AG04449 (cell line): ENCODE measurements at regions of chr3 and their contacts with region 1.

Region 1: DNA sequence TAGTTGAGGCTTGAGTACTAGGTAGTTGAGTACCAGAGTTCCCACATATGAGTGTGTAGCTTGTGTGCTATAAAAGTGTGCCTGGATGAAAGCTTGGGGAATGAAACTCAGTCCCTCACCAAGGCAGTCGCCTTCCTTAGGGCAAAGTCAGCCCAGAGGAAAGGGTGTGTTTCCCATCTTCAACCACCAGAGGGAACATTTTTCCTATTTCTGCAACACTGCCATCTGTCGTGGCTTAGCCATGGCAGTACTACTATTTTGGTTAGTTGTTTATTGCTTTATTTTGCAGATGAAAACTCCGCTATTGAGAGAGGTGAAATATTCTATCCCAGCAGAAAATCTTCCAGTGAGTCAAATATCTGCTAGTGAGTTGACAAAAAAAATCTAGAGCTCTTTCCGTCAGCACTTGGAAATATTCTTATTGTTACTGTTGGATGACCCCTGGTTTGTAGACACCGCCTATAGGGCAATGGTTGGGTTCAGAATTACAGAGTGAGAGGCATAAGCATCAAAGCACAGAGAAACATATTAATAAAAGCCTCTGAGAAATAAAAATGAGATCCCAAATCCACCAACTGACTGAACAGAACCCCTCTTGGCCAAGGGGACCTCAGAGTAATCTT is 239.9 kb downstream of the CPNE4 start:
- DNase-seq: peak; percentile 21
- H3K4me3 ChIP-seq: no peak overlapping the region
- CTCF ChIP-seq: peak; percentile 80

Region 2: DNA sequence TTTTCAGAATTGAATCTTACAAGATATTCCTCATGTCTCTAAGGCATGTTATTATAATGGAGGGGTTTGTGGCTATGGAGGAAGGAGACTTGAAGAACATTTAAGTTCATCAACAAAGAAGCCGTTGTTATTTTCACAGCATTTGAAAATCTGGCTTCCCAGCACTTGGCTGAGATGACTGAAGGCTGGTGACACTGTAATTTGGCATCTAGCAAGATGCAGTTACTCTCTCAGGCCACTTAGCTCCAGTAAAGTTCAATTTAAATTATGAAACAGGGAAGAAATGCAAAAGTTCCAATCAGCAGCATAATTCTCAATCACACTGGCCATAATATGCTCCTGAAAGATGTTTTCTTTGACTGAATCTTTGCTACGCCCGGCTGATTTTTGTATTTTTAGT is 552.7 kb before region 1 on chr3:
- CTCF ChIA-PET with region 1: no interaction called
- POLR2A ChIA-PET with region 1: no interaction called
- DNase-seq: no peak
- H3K4me3 ChIP-seq: no peak overlapping the region
- CTCF ChIP-seq: no peak

Region 3: DNA sequence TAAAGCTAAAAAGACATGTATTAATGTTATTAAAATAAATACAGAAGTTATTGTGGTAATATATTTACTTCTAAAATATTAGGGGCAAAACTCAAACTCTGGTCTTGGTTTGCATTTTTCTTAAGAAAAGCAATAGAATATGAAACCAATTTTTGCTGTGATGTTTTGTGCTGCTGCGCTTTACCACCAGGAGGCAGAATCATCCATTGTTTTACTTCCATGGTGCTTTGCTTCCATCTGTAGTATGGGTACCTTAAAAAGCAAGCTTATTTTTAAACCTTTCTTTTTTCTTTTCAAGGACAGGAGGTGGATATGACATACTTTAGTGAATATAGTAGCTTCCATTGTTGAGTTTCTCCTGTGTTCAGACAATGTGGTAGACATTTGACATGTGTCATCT is 245.5 kb before region 1 on chr3:
- CTCF ChIA-PET with region 1: interaction called, 16 read pairs
- POLR2A ChIA-PET with region 1: no interaction called
- DNase-seq: no peak
- H3K4me3 ChIP-seq: no peak overlapping the region
- CTCF ChIP-seq: peak; percentile 15

Region 4: GRCh38 chr3:131782751-131783150 is 12.1 kb before region 1 on chr3:
- CTCF ChIA-PET with region 1: interaction called, 38 read pairs
- POLR2A ChIA-PET with region 1: no interaction called
- DNase-seq: no peak
- H3K4me3 ChIP-seq: no peak overlapping the region
- CTCF ChIP-seq: no peak

Region 5: GRCh38 chr3:132006605-132007204 is 211.8 kb after region 1 on chr3:
- CTCF ChIA-PET with region 1: interaction called, 16 read pairs
- POLR2A ChIA-PET with region 1: no interaction called
- DNase-seq: no peak
- H3K4me3 ChIP-seq: no peak overlapping the region
- CTCF ChIP-seq: peak; percentile 53

Region 6: DNA sequence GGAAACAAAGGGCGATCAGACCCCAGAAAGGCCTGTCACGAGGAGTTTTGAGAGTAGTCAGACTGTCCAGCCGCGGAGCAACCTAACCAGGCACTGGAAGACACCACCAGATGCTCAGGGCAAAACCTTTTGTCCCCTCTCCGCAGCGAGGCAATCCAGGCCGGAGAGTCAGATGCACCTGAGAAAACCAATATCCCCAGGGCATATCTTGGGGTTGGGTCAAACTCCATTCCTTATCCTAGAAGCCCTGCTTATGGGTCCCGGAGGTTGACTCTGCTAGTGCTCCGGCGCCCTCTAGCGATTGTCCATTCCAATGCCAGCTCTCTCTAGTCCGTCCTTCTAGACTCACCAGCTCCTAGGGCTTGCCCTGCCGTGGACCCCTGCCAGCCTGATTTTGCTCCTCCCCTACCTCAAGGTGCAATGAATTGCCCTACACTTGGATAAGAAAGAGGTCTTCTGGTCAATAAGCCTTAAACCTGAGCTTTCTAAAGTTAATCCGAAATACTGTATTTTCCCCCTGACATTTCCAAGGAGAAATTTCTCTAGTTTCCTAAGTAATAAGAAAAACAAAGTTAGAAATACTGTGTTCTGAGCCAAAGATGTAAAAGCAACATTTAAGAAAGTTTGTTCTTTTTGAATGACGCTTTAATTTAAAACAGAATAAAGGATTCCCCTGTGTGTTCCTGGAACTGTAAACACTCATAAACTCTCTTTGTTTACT is 234.5 kb after region 1 on chr3:
- CTCF ChIA-PET with region 1: interaction called, 218 read pairs
- POLR2A ChIA-PET with region 1: no interaction called
- DNase-seq: no peak
- H3K4me3 ChIP-seq: no peak overlapping the region
- CTCF ChIP-seq: peak; percentile 96